Transverse colon (tissue), 4 donors: ENCODE measurements at regions of chr11 and their contacts with region 1.

Region 1: GRCh38 chr11:134132793-134133192 is 63.9 kb downstream of the JAM3 start:
- DNase-seq: no peak
- H3K4me3 ChIP-seq: no peak overlapping the region
- H3K27ac ChIP-seq: no peak overlapping the region
- H3K4me1 ChIP-seq: no peaks in the 10 kb centered on the region
- H3K27me3 ChIP-seq: no peaks in the 10 kb centered on the region
- CTCF ChIP-seq: no peak
- EP300 ChIP-seq: no peak
- POLR2A ChIP-seq: no peak

Region 2: GRCh38 chr11:134033696-134034491 is 98.9 kb before region 1 on chr11:
- in situ Hi-C with region 1: no loop called
- intact Hi-C with region 1: no loop called
- DNase-seq: peak; percentile 69
- H3K4me3 ChIP-seq: peak overlapping the region in 1 of 4 donors; percentile 21
- H3K27ac ChIP-seq: peak overlapping the region; percentile 73 to 90 (median 87)
- H3K4me1 ChIP-seq: peaks cover 27 to 43% (median 35%) of the 10 kb centered on the region in 4 donors
- H3K27me3 ChIP-seq: peaks cover 12% of the 10 kb centered on the region
- CTCF ChIP-seq: no peak
- EP300 ChIP-seq: no peak
- POLR2A ChIP-seq: no peak

Region 3: GRCh38 chr11:134062265-134063123 is 70.3 kb before region 1 on chr11:
- in situ Hi-C with region 1: loop called in 1 of 4 experiments (anchors 10 kb)
- intact Hi-C with region 1: loop called (anchors 5 kb)
- DNase-seq: no peak
- H3K4me3 ChIP-seq: no peak overlapping the region
- H3K27ac ChIP-seq: no peak overlapping the region
- H3K4me1 ChIP-seq: no peaks in the 10 kb centered on the region
- H3K27me3 ChIP-seq: peaks cover 10% of the 10 kb centered on the region
- CTCF ChIP-seq: no peak
- EP300 ChIP-seq: no peak
- POLR2A ChIP-seq: no peak